ENCODE measurements at regions of chr5 and their contacts with region 1.

Region 1: GRCh38 chr5:118611332-118611945 is 376.9 kb downstream of the DTWD2 start:
- DNase-seq: peak; percentile 25
- H3K4me3 ChIP-seq: no peak overlapping the region
- H3K27ac ChIP-seq: no peak overlapping the region
- H3K4me1 ChIP-seq: peaks cover 3% of the 10 kb centered on the region
- H3K27me3 ChIP-seq: no peaks in the 10 kb centered on the region
- CTCF ChIP-seq: peak; percentile 85 to 89

Region 2: DNA sequence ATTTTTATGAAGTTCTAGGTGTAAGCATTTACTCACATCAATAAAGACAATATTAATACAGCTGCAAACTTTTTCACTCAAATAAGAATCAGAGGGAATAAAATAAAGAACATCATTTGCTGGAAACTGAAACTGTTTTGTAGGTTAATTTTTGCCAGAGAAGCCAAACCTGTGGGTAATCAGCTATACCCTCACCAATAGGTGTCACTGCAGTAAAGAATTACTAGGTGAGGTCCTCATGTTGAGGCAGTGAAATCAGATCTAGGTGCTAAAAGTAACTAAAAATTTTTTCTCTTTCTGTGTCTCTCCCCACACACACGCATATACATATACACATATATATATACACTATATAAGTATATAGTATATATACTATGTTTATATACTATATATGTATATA is 1020.5 kb before region 1 on chr5:
- CTCF ChIA-PET with region 1: no interaction called
- dilution Hi-C with region 1: no loop called
- in situ Hi-C with region 1: no loop called
- intact Hi-C with region 1: loop called (anchors 5 kb)
- DNase-seq: no peak
- H3K4me3 ChIP-seq: no peak overlapping the region
- H3K27ac ChIP-seq: no peak overlapping the region
- H3K4me1 ChIP-seq: no peaks in the 10 kb centered on the region
- H3K27me3 ChIP-seq: no peaks in the 10 kb centered on the region
- CTCF ChIP-seq: peak; percentile 21 to 48

Region 3: DNA sequence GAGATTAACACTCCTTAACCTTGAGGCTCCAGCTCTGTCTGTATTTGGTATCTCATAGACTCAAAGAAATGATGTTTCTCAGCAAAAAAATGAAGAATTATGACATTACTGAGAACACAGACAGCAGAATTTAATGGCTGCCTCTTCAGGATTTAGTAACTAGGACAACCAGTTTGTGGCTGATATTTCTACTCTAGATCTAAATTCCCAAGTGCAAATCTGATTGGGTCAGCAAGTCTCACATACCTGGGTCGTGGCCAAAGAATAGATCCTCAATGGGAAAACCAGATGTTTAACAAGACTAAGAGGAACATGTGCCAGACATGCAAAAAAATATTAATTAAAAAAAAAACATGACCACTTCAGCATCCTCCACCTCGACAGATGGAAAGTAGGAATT is 232.0 kb before region 1 on chr5:
- CTCF ChIA-PET with region 1: no interaction called
- dilution Hi-C with region 1: no loop called
- in situ Hi-C with region 1: no loop called
- intact Hi-C with region 1: loop called (anchors 5 kb)
- DNase-seq: no peak
- H3K4me3 ChIP-seq: no peak overlapping the region
- H3K27ac ChIP-seq: no peak overlapping the region
- H3K4me1 ChIP-seq: no peaks in the 10 kb centered on the region
- H3K27me3 ChIP-seq: no peaks in the 10 kb centered on the region
- CTCF ChIP-seq: no peak

Region 4: GRCh38 chr5:118450924-118451332 is 160.5 kb before region 1 on chr5:
- CTCF ChIA-PET with region 1: no interaction called
- dilution Hi-C with region 1: loop called (anchors 25 kb)
- in situ Hi-C with region 1: no loop called
- intact Hi-C with region 1: no loop called
- DNase-seq: no peak
- H3K4me3 ChIP-seq: no peak overlapping the region
- H3K27ac ChIP-seq: no peak overlapping the region
- H3K4me1 ChIP-seq: peaks cover 5% of the 10 kb centered on the region
- H3K27me3 ChIP-seq: no peaks in the 10 kb centered on the region
- CTCF ChIP-seq: no peak

Measured in mammary epithelial cell (primary cell).